Activated CD8-positive, alpha-beta T cell treated with anti-CD3 and anti-CD28 coated beads for 36 hours (primary cell): ENCODE measurements at regions of chr5 and their contacts with region 1.

Region 1: GRCh38 chr5:101942321-101943215 is 353.5 kb downstream of the SLCO4C1 start:
- DNase-seq: peak; percentile 13
- ATAC-seq: no peak
- H3K4me3 Mint-ChIP-seq: no peak overlapping the region
- H3K27ac Mint-ChIP-seq: no peak overlapping the region
- H3K4me1 Mint-ChIP-seq: peaks cover 3% of the 10 kb centered on the region
- H3K27me3 Mint-ChIP-seq: no peaks in the 10 kb centered on the region
- CTCF ChIP-seq: peak; percentile 28

Region 2: DNA sequence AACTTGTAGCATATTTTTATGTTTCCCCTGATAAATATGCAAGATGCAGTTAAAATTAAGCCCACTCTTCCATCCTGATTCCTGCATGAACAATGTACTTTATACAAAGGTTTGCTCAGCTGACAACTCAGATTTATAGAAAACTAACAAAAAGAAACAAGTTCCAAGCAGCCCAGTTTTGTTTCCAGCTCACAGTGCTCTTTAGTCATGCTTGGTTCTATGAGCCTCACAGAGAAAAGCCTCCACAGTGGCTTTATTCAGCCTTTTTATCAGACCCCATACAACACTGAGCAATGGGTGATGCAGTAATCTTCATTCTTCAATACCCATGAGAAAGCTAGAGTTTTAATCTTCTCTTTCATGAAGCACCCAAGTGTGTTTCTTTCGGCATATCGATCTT is 23.9 kb after region 1 on chr5:
- CTCF ChIA-PET with region 1: no interaction called
- POLR2A ChIA-PET with region 1: no interaction called
- intact Hi-C with region 1: no loop called
- DNase-seq: no peak
- ATAC-seq: no peak
- H3K4me3 Mint-ChIP-seq: no peak overlapping the region
- H3K27ac Mint-ChIP-seq: no peak overlapping the region
- H3K4me1 Mint-ChIP-seq: no peaks in the 10 kb centered on the region
- H3K27me3 Mint-ChIP-seq: no peaks in the 10 kb centered on the region
- CTCF ChIP-seq: no peak

Region 3: GRCh38 chr5:101977729-101978345 is 35.3 kb after region 1 on chr5:
- CTCF ChIA-PET with region 1: interaction called, 6 read pairs
- POLR2A ChIA-PET with region 1: no interaction called
- intact Hi-C with region 1: loop called (anchors 5 kb)
- DNase-seq: no peak
- ATAC-seq: no peak
- H3K4me3 Mint-ChIP-seq: no peak overlapping the region
- H3K27ac Mint-ChIP-seq: no peak overlapping the region
- H3K4me1 Mint-ChIP-seq: no peaks in the 10 kb centered on the region
- H3K27me3 Mint-ChIP-seq: no peaks in the 10 kb centered on the region
- CTCF ChIP-seq: peak; percentile 73

Region 4: DNA sequence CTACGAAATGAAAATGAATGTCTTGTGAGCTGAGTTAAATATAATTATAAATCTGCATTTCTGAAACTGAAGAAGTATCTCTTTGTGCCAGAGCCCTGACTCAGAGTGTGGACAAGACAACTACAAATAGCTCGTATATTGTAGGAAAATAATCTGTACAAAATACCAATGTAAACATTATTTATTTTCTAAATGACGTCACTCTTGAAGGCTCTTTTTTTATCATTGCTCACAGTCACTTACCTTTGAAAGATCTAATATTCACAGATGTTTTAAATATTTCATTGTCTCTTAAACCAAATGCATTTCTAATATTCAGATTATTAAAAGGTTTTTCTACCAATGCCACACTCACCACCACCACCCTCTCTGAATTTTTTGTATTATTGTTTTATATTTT is 127.4 kb after region 1 on chr5:
- CTCF ChIA-PET with region 1: no interaction called
- POLR2A ChIA-PET with region 1: no interaction called
- intact Hi-C with region 1: no loop called
- DNase-seq: no peak
- ATAC-seq: no peak
- H3K4me3 Mint-ChIP-seq: no peak overlapping the region
- H3K27ac Mint-ChIP-seq: no peak overlapping the region
- H3K4me1 Mint-ChIP-seq: no peaks in the 10 kb centered on the region
- H3K27me3 Mint-ChIP-seq: no peaks in the 10 kb centered on the region
- CTCF ChIP-seq: no peak